Naive thymus-derived CD4-positive, alpha-beta T cell (primary cell): ENCODE measurements at regions of chr14 and their contacts with region 1.

Region 1: GRCh38 chr14:69625299-69626131 is 14.1 kb downstream of the SUSD6 start:
- DNase-seq: peak; percentile 34 to 74 (median 66)
- ATAC-seq: peak; percentile 93
- H3K4me3 ChIP-seq: peak overlapping the region; percentile 41
- H3K4me3 Mint-ChIP-seq: peak overlapping the region; percentile 74 to 86 (median 82)
- H3K27ac ChIP-seq: peak overlapping the region; percentile 71
- H3K27ac Mint-ChIP-seq: peak overlapping the region; percentile 81 to 97 (median 92)
- H3K4me1 ChIP-seq: peaks cover 56 to 80% of the 10 kb centered on the region in 2 donors
- H3K4me1 Mint-ChIP-seq: peaks cover 69 to 97% (median 91%) of the 10 kb centered on the region in 7 donors
- H3K27me3 ChIP-seq: no peaks in the 10 kb centered on the region
- H3K27me3 Mint-ChIP-seq: no peaks in the 10 kb centered on the region

Region 2: GRCh38 chr14:69605738-69606137 is 19.8 kb before region 1 on chr14:
- CTCF ChIA-PET with region 1: interaction called, 11 read pairs
- POLR2A ChIA-PET with region 1: interaction called, 39 read pairs
- intact Hi-C with region 1: loop called (anchors 2 kb)
- DNase-seq: no peak
- ATAC-seq: no peak
- H3K4me3 ChIP-seq: no peak overlapping the region
- H3K4me3 Mint-ChIP-seq: no peak overlapping the region
- H3K27ac ChIP-seq: no peak overlapping the region
- H3K27ac Mint-ChIP-seq: peak overlapping the region in 1 of 9 donors; percentile 20
- H3K4me1 ChIP-seq: peaks cover 5 to 12% of the 10 kb centered on the region in 2 donors
- H3K4me1 Mint-ChIP-seq: peaks cover 13 to 38% (median 21%) of the 10 kb centered on the region in 7 donors
- H3K27me3 ChIP-seq: no peaks in the 10 kb centered on the region
- H3K27me3 Mint-ChIP-seq: no peaks in the 10 kb centered on the region

Region 3: GRCh38 chr14:69637503-69638030 is 12.1 kb after region 1 on chr14:
- CTCF ChIA-PET with region 1: no interaction called
- POLR2A ChIA-PET with region 1: interaction called, 9 read pairs
- intact Hi-C with region 1: loop called in 1 of 2 experiments (anchors 1 kb)
- DNase-seq: no peak
- ATAC-seq: peak; percentile 21
- H3K4me3 ChIP-seq: no peak overlapping the region
- H3K4me3 Mint-ChIP-seq: peak overlapping the region; percentile 55 to 83 (median 72)
- H3K27ac ChIP-seq: peak overlapping the region; percentile 24
- H3K27ac Mint-ChIP-seq: peak overlapping the region; percentile 47 to 94 (median 80)
- H3K4me1 ChIP-seq: peaks cover 42 to 60% of the 10 kb centered on the region in 2 donors
- H3K4me1 Mint-ChIP-seq: peaks cover 68 to 93% (median 81%) of the 10 kb centered on the region in 7 donors
- H3K27me3 ChIP-seq: no peaks in the 10 kb centered on the region
- H3K27me3 Mint-ChIP-seq: no peaks in the 10 kb centered on the region

Region 4: DNA sequence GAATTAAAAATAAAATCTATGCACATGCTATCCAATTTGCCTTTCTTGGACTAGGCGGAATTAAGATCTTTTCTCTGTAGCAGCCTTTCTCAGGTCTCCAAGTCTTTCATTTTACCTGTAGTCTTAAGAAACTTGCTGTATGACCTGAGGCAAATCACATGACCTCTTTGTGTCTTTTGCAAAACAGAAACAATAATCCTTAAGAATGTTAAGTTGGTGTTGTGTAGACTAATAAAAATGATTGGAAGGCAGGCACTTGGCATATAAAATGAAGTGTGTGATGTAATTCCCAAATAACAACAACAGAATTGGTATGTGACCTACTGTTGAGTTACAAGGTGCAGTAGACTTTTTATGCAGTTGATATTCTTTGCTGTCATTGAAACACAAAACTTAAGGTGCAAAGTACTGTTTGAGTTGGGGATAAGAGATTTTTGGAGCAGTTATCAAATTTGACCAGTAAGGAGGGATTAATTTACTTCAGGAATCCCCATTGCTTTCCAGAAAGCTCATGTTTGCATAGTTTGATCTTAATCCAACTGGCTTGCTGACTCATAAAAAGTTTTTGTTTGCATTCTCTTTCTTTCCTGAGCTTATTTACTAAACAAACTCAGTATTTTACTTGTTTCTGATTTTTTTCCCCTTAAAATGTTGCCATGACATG is 37.3 kb after region 1 on chr14:
- CTCF ChIA-PET with region 1: no interaction called
- POLR2A ChIA-PET with region 1: interaction called, 3 read pairs
- intact Hi-C with region 1: loop called in 1 of 2 experiments (anchors 1 kb)
- DNase-seq: no peak
- ATAC-seq: no peak
- H3K4me3 ChIP-seq: no peak overlapping the region
- H3K4me3 Mint-ChIP-seq: peak overlapping the region in 1 of 10 donors; percentile 20
- H3K27ac ChIP-seq: peak overlapping the region; percentile 16
- H3K27ac Mint-ChIP-seq: peak overlapping the region; percentile 14 to 77 (median 68)
- H3K4me1 ChIP-seq: peaks cover 15 to 36% of the 10 kb centered on the region in 2 donors
- H3K4me1 Mint-ChIP-seq: peaks cover 53 to 94% (median 90%) of the 10 kb centered on the region in 7 donors
- H3K27me3 ChIP-seq: no peaks in the 10 kb centered on the region
- H3K27me3 Mint-ChIP-seq: no peaks in the 10 kb centered on the region

Region 5: DNA sequence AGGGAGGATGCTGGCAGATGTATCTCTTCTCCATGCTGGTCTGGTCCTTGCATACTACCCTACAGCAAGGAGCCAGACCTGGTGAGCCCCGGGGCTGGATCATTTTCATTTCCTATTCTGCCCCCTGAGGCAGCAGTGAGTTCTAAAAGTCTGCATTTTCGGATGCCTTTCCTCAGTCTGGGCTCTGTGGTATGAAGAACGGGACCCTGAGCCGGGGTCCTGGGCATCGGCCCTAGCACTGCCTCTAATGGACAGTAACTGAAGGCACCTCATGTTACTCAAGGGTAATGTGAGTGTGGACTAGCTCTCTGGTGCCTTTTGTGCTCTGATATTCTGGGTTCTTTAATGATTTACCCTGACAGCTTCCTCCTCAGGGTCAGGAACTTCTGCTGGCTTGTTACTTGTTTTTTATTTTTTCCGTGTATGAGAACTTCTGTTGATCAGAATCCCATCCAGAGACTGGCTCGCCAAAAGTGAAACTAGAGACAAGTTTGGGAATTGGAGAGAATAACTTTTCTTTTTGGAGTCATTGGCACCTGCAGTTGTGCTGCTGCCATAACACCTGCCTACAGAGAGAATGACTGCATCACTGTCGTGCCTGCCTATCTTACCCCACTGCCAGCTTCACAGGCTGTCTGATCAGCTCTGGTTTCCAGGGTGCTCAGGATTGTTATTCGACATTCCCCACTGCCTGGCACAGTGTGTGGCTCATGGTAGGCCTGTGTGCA is 48.2 kb after region 1 on chr14:
- CTCF ChIA-PET with region 1: no interaction called
- POLR2A ChIA-PET with region 1: no interaction called
- intact Hi-C with region 1: loop called in 1 of 2 experiments (anchors 1 kb)
- DNase-seq: no peak
- ATAC-seq: peak; percentile 56
- H3K4me3 ChIP-seq: peak overlapping the region; percentile 9
- H3K4me3 Mint-ChIP-seq: peak overlapping the region; percentile 39 to 80 (median 64)
- H3K27ac ChIP-seq: peak overlapping the region; percentile 55
- H3K27ac Mint-ChIP-seq: peak overlapping the region; percentile 43 to 91 (median 80)
- H3K4me1 ChIP-seq: peaks cover 46 to 67% of the 10 kb centered on the region in 2 donors
- H3K4me1 Mint-ChIP-seq: peaks cover 64 to 89% (median 82%) of the 10 kb centered on the region in 7 donors
- H3K27me3 ChIP-seq: no peaks in the 10 kb centered on the region
- H3K27me3 Mint-ChIP-seq: no peaks in the 10 kb centered on the region